ENCODE measurements at regions of chr5 and their contacts with region 1.

Region 1: DNA sequence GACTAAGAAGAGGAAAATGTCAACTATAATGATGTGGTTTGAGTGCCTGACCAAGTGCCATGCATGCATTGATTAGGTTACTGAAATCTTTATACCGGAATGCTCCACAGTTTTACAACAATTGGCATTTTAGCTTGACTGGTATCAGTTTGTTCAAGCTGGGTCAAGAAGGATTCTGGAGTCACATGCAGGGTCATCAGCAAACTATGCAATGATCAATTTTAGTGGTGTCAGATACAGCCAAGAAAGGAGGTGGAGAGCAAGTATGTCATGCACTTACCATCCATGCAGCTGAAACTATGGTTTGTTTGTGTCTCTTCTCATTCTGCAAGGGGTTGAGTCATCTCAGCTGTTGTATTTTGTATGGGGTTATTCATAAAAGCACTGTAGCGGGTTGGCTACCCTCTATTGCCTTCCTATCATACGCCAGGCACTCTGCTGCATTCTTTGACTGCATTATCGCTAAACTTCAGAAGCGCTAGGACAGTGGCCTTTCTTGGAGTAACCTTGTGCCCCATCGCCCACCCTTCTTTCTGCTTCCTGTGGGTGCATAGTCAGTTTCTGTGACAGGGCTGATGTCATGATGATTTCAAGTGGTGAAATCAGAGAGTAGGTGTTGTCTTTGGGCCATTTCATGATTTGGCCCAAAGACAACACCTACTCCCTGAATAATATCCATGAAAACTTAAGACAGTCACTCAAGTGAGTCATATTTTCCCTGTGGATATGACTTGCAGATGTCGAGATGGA is 145.4 kb downstream of the MTX3 start:
- DNase-seq: peak; percentile 62
- H3K4me3 Mint-ChIP-seq: no peak overlapping the region
- H3K27ac Mint-ChIP-seq: peak overlapping the region; percentile 53
- H3K4me1 Mint-ChIP-seq: peaks cover 14% of the 10 kb centered on the region
- H3K27me3 Mint-ChIP-seq: peaks cover 14% of the 10 kb centered on the region

Region 2: DNA sequence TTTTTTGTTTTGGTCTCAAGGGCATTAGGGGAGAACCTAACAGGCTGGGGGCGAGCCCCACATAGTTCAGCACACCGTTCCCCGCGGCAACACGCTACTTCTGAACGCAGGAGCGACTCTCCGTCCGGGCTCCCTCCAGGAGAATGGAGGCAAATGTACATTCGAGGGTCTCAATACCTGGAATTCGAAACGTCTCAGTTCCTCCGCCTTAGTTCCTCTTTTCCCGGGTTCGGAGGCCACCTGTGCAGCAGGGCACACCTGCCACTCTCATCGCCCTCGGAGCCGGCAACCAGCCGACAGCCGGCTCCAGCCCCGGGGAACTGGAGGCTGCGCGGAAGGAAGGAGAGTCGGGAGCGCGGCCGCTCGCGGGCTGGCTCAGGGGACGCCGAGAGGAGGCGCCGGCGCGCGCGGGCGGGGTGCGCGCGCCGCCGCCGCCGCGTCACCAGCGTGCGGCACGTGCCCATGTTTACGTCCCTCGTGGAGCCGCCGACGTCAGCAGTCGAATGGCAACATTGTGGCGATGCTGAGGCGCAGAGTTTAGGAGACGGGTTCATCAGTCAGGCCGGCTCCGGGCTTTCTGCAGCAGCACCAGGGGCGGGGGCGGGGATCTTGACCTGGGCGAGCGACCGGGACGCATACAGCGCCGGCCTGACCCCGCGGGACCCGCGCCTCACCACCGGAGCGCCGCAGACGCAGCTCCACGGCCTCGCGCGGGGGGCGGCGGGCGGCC is 609.8 kb before region 1 on chr5 and contains the start of gene JMY:
- CTCF ChIA-PET with region 1: no interaction called
- POLR2A ChIA-PET with region 1: no interaction called
- intact Hi-C with region 1: loop called (anchors 5 kb)
- DNase-seq: peak; percentile 91
- H3K4me3 Mint-ChIP-seq: peak within 1 kb of the TSS; percentile 94
- H3K27ac Mint-ChIP-seq: peak within 1 kb of the TSS; percentile 98
- H3K4me1 Mint-ChIP-seq: peaks cover 15% of the 10 kb centered on the region
- H3K27me3 Mint-ChIP-seq: no peaks in the 10 kb centered on the region
- total RNA-seq, gene JMY: 8.6 to 9.1 TPM

Region 3: DNA sequence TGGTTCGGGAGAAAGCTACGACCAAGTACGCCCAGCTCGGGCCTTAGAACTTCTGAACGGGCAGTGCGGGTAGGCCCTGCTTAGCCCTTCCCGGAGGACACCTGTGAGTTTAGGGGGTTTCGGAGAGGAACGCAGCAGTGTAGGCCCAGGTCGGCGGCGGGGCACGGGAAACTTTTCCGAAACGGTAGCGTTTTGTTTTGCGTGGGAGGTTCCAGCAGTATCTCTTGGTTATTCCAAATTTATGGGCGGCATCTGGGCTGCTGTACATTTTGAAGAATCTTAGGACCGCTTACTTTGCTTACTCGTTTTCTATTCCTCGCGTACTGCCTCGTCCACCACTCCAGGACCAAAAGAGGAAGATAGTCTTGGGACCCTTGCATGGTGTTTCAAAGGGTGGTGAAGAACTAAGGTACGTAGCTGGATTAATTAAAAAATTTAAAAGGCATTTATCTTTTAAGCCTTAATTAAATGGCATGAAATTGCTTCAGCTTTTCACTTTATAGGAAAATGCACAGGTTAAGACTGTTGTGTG is 232.9 kb before region 1 on chr5:
- CTCF ChIA-PET with region 1: no interaction called
- POLR2A ChIA-PET with region 1: no interaction called
- intact Hi-C with region 1: loop called (anchors 5 kb)
- DNase-seq: no peak
- H3K4me3 Mint-ChIP-seq: peak overlapping the region; percentile 98
- H3K27ac Mint-ChIP-seq: peak overlapping the region; percentile 95
- H3K4me1 Mint-ChIP-seq: peaks cover 31% of the 10 kb centered on the region
- H3K27me3 Mint-ChIP-seq: no peaks in the 10 kb centered on the region

Region 4: DNA sequence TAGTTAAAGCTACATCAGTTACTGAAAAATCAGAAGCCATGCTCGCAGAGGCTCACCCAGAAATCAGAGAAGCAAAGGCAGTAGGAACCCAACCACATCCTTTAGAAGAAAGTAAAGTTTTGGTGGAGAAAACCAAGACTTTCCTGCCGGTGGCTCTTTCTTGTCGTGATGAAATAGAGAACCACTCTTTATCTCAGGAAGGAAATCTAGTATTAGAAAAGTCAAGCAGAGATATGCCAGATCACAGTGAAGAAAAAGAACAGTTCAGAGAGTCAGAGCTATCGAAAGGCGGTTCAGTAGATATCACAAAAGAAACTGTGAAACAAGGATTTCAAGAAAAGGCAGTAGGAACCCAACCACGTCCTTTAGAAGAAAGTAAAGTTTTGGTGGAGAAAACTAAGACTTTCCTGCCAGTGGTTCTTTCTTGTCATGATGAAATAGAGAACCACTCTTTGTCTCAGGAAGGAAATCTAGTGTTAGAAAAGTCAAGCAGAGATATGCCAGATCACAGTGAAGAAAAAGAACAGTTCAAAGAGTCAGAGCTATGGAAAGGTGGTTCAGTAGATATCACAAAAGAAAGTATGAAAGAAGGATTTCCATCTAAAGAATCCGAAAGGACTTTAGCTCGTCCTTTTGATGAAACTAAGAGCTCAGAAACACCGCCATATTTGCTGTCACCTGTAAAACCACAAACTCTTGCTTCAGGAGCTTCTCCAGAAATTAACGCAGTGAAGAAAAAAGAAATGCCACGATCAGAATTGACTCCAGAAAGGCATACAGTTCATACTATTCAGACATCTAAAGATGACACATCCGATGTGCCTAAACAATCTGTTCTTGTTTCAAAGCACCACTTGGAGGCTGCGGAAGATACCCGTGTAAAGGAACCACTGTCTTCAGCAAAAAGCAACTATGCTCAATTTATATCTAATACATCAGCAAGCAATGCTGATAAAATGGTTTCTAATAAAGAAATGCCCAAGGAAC is 108.8 kb before region 1 on chr5:
- CTCF ChIA-PET with region 1: no interaction called
- POLR2A ChIA-PET with region 1: no interaction called
- intact Hi-C with region 1: loop called (anchors 2 kb)
- DNase-seq: peak; percentile 21
- H3K4me3 Mint-ChIP-seq: peak overlapping the region; percentile 57
- H3K27ac Mint-ChIP-seq: peak overlapping the region; percentile 62
- H3K4me1 Mint-ChIP-seq: peaks cover 55% of the 10 kb centered on the region
- H3K27me3 Mint-ChIP-seq: peaks cover 34% of the 10 kb centered on the region

Region 5: GRCh38 chr5:80487829-80488721 is 642.5 kb after region 1 on chr5 and contains the start of gene FAM151B:
- CTCF ChIA-PET with region 1: no interaction called
- POLR2A ChIA-PET with region 1: no interaction called
- intact Hi-C with region 1: no loop called
- DNase-seq: peak; percentile 85
- H3K4me3 Mint-ChIP-seq: peak within 1 kb of the TSS; percentile 72
- H3K27ac Mint-ChIP-seq: no peak within 1 kb of the TSS
- H3K4me1 Mint-ChIP-seq: peaks cover 11% of the 10 kb centered on the region
- H3K27me3 Mint-ChIP-seq: peaks cover 7% of the 10 kb centered on the region
- total RNA-seq, gene FAM151B: 0.24 to 0.27 TPM